HepG2 (cell line): ENCODE measurements at regions of chr5 and their contacts with region 1.

Region 1: DNA sequence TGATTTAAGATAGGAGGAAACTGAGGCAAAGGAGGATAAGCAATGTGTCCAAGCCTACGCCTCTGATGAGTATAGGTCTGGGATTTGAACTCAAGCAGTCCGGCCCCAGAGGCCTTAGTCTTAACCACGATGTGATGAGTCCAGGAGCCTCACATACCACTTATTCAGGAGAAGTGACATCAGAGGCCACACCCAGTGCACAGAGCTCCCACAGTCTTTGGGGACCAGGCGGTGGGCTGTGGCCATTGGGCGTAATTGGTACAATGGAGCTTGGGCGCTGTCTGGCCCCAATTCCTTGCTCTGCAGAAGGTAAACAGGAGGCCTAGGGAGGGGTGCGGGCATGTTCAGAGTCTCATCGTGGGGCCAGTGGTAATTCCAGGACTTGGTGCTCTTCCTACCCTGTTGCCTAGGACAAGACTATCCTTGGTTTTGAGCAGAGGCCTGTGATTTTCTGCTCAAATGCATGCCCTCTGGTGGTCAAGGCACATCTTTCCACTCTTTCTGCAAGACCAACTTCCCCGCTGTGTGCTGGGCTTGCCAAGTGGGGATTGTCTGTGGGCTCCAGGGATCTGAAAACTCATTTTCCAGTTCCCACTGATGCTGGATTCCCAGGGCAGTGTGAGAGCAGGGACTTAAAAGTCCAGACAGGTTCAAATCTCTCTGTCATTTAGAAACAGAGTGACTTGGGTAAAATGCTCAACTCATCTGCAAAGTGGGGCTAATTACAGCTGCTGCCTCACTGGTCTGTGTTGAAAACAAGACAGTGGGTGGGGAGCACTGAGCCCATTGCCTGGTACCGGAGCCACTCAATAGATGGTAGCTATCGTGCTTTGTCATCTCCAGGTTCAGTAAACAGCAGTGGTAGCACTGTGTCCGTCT is 15.8 kb downstream of the NDST1 start:
- DNase-seq: peak; percentile 73
- ATAC-seq: peak; percentile 28
- H3K4me3 ChIP-seq: no peak overlapping the region
- H3K27ac ChIP-seq: peak overlapping the region; percentile 84
- H3K4me1 ChIP-seq: peaks cover 77% of the 10 kb centered on the region
- H3K27me3 ChIP-seq: no peaks in the 10 kb centered on the region
- CTCF ChIP-seq: peak; percentile 69
- EP300 ChIP-seq: no peak
- POLR2A ChIP-seq: no peak
- RAD21 ChIP-seq: peak; percentile 74

Region 2: GRCh38 chr5:150436141-150436680 is 87.5 kb before region 1 on chr5:
- CTCF ChIA-PET with region 1: no interaction called
- POLR2A ChIA-PET with region 1: no interaction called
- in situ Hi-C with region 1: no loop called
- intact Hi-C with region 1: no loop called
- DNase-seq: peak; percentile 71
- ATAC-seq: peak; percentile 83
- H3K4me3 ChIP-seq: no peak overlapping the region
- H3K27ac ChIP-seq: no peak overlapping the region
- H3K4me1 ChIP-seq: peaks cover 9% of the 10 kb centered on the region
- H3K27me3 ChIP-seq: no peaks in the 10 kb centered on the region; a peak in 1 of 5 replicates
- CTCF ChIP-seq: peak; percentile 95
- EP300 ChIP-seq: no peak
- POLR2A ChIP-seq: no peak
- RAD21 ChIP-seq: peak; percentile 89

Region 3: DNA sequence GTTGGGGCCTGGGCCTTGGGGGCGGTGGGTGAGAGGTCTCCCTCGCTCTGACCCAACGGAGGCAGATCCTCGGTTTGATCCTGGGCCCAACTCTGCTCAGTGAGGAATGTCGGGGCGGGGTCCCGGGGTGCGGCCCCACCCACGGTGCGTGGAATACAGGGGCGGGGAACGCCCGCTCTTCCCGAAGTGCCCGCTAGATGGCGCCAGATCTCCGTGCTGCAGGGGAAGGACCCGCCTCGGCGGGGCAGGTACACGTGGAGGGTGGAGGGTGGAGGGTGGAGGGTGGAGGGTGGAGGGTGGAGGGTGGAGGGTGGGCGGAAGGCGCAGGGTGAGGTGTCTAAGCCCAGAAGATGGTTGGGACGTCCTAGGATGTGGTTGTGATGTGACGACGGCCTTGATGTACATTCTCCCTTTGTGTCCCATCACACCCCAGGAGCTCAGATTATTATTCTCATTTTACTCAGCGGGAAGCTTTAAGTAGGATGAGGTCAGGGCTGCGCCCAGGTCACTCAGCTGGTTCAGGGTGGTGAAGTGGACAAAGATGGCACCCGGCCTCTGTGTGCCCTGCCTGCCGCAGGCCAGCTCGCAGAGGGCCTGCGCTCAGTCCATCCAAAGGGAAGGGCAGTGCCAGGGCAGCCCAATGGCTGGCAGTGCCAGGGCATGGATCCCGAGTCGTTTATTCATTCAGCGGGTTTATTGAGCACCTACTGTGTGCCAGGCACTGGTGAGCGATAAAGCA is 64.7 kb before region 1 on chr5:
- CTCF ChIA-PET with region 1: interaction called, 18 read pairs
- POLR2A ChIA-PET with region 1: interaction called, 8 read pairs
- in situ Hi-C with region 1: loop called (anchors 5 kb)
- intact Hi-C with region 1: loop called (anchors 1 kb)
- DNase-seq: peak; percentile 44
- ATAC-seq: peak; percentile 86
- H3K4me3 ChIP-seq: peak overlapping the region in 2 of 3 experiments; percentile 42 to 62; a peak in 4 of 6 replicates
- H3K27ac ChIP-seq: no peak overlapping the region
- H3K4me1 ChIP-seq: peaks cover 47% of the 10 kb centered on the region
- H3K27me3 ChIP-seq: peaks cover 2 to 7% of the 10 kb centered on the region in 2 experiments; a peak in 1 of 5 replicates
- CTCF ChIP-seq: peak; percentile 92
- EP300 ChIP-seq: no peak
- POLR2A ChIP-seq: no peak
- RAD21 ChIP-seq: peak; percentile 84

Region 4: GRCh38 chr5:150486402-150487198 is 37.1 kb before region 1 on chr5:
- CTCF ChIA-PET with region 1: interaction called, 10 read pairs
- POLR2A ChIA-PET with region 1: interaction called, 39 read pairs
- in situ Hi-C with region 1: loop called (anchors 5 kb)
- intact Hi-C with region 1: loop called (anchors 1 kb)
- DNase-seq: peak; percentile 71
- ATAC-seq: peak; percentile 39
- H3K4me3 ChIP-seq: peak overlapping the region; percentile 88 to 94 (median 91)
- H3K27ac ChIP-seq: peak overlapping the region; percentile 96
- H3K4me1 ChIP-seq: peaks cover 81% of the 10 kb centered on the region
- H3K27me3 ChIP-seq: peaks cover 2 to 8% of the 10 kb centered on the region in 2 experiments; a peak in 2 of 5 replicates
- CTCF ChIP-seq: peak; percentile 22
- EP300 ChIP-seq: no peak
- POLR2A ChIP-seq: peak; percentile 20 to 34; a peak in 1 of 4 replicates
- RAD21 ChIP-seq: peak; percentile 39; the same call in 1 of the 2 replicates

Region 5: DNA sequence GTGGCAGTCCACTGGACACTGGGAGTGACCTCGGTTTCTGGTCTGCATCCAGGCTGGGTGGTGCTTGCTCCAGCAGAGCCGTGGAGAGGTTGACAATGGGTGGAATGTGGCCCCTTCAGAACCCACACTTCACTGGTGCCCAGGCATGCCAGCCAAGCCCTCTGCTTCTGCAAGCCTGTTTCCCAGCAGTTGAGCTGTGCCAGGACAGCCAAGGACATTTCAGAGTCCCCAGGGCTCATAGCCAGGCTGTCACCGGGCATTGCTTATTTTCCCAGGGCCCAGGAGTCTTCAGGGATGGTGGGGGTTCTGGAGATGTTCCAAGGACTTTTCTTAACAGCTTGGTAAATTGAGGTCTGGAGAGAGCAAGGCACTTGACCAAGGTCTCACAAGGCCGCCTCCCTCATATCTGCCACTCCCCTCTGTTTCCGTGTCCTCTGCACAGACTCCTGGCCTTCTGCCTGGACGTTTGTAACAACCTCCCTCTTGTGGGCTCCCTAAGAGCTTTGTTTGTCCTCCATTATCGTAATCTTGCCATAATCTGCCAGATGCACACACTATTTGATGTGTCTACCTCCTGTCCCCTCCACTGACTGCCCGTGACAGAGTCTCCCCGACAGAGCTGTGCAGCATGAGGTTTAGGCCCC is 19.6 kb before region 1 on chr5:
- CTCF ChIA-PET with region 1: no interaction called
- POLR2A ChIA-PET with region 1: interaction called, 35 read pairs
- in situ Hi-C with region 1: no loop called
- intact Hi-C with region 1: no loop called
- DNase-seq: peak; percentile 67
- ATAC-seq: peak; percentile 42
- H3K4me3 ChIP-seq: no peak overlapping the region
- H3K27ac ChIP-seq: peak overlapping the region; percentile 12
- H3K4me1 ChIP-seq: peaks cover 99% of the 10 kb centered on the region
- H3K27me3 ChIP-seq: no peaks in the 10 kb centered on the region
- CTCF ChIP-seq: no peak
- EP300 ChIP-seq: no peak
- POLR2A ChIP-seq: no peak
- RAD21 ChIP-seq: no peak

Region 6: GRCh38 chr5:150511578-150512367 is 11.9 kb before region 1 on chr5:
- CTCF ChIA-PET with region 1: interaction called, 3 read pairs
- POLR2A ChIA-PET with region 1: interaction called, 35 read pairs
- in situ Hi-C with region 1: no loop called
- intact Hi-C with region 1: no loop called
- DNase-seq: no peak
- ATAC-seq: no peak
- H3K4me3 ChIP-seq: peak overlapping the region in 1 of 3 experiments; percentile 12; a peak in 1 of 6 replicates
- H3K27ac ChIP-seq: peak overlapping the region; percentile 77
- H3K4me1 ChIP-seq: peaks cover 98% of the 10 kb centered on the region
- H3K27me3 ChIP-seq: no peaks in the 10 kb centered on the region
- CTCF ChIP-seq: no peak
- EP300 ChIP-seq: no peak
- POLR2A ChIP-seq: no peak
- RAD21 ChIP-seq: no peak